PC-9 (cell line): ENCODE measurements at regions of chr19 and their contacts with region 1.

Region 1: DNA sequence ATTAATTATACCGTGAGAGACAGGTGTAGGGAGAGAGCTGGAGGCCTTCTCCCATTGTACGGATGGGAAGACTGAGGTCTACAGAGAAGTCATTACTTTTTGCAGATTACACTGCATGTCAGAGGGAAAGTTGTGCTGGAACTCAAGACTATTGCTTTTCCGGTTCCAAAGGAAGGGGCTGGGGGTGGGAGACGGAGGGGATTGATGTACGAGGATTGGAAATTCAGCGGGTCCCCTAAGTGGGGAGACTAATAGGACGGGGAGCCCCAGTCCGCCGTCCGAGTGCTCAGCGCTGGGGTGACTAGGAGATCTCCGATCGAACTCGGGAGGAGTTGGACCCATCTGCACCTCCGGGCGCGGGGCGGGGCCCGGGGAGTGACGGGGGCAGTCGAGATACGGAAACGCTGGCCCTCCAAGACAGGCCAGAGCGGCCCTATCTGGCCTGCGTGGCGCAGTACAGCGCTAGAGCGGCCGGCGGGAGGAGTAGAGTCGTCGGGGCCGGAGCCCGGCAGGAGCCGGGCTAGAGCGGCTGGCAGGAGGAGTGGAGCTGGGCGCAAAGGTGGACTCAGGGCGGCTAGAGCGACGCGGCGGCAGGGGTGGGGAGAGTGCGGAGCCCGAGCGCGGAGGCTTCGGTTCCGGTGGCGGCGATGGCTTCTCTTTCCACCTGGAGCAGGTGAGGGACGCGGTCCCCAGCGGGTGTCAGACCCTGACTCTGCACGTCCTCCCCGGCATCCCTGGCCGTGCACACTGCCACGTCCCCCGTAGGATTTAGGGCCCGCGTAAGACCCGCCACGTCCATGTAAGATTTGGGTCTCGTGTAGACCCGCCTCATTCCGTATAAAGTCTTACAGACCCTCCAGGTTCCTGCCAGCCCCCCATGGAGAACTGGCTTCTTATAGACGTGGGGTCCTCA is 1.1 kb downstream of the ARHGEF1 start:
- DNase-seq: peak; percentile 91 to 96
- H3K4me3 ChIP-seq: peak overlapping the region; percentile 83
- H3K27ac ChIP-seq: no peak overlapping the region
- H3K4me1 ChIP-seq: peaks cover 31% of the 10 kb centered on the region
- H3K27me3 ChIP-seq: no peaks in the 10 kb centered on the region
- CTCF ChIP-seq: no peak

Region 2: DNA sequence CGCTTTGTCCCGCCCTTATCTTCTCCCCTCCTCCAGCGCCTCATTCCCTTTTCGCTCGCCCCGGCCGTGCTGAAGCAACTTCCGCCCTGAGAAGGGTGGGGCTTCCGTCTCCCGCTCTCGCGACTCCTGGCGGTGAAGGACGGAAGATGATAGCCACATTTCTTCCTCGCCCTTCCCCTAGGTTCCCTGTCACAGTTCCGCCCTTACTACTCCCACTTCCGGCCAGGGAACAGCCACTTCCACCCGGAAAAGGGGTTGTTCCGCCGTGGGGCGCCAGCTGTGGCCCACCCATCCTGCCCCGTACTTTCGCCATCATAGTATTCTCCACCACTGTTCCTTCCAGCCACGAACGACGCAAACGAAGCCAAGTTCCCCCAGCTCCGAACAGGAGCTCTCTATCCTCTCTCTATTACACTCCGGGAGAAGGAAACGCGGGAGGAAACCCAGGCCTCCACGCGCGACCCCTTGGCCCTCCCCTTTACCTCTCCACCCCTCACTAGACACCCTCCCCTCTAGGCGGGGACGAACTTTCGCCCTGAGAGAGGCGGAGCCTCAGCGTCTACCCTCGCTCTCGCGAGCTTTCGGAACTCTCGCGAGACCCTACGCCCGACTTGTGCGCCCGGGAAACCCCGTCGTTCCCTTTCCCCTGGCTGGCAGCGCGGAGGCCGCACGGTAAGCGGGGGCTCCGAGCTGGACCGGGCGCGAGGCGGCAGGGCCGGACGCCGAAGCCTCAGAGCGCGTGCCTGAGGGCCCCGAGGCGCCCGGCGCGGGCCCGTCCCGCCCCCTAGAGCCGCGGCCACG is 24.3 kb before region 1 on chr19 and contains the start of gene RPS19:
- CTCF ChIA-PET with region 1: interaction called, 7 read pairs
- POLR2A ChIA-PET with region 1: interaction called, 3 read pairs
- intact Hi-C with region 1: loop called (anchors 1 kb)
- DNase-seq: peak; percentile 93 to 98
- H3K4me3 ChIP-seq: peak within 1 kb of the TSS; percentile 98
- H3K27ac ChIP-seq: peak within 1 kb of the TSS; percentile 96
- H3K4me1 ChIP-seq: peaks cover 41% of the 10 kb centered on the region
- H3K27me3 ChIP-seq: peaks cover 7% of the 10 kb centered on the region
- CTCF ChIP-seq: peak; percentile 63
- total RNA-seq, gene RPS19: 2,593 and 3,356 TPM in 2 replicates

Region 3: DNA sequence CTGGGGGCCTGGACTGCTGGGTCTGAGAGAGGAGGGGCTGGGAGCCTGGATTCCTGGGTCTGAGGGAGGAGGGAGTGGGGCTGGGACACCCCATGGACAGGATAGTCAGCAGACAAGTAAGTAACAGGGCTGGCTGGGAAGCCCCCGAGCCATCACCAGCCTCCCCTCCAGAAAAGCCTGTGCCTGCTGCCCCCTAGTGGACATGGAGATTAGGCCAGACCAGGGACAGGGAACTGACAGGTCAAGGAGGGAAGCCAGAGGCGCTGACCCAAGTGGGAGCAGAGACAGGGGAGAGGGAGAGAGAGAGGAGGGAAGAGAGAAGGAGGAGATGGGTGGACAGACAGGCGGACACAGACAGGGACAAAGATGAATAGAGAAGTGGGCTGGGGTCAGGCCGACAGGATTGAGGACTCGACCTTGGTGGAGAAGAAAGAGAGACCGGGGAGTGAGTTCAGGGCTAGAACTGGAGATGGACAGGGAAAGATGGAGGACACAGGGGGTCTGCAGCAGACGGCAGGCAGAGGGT is 50.8 kb after region 1 on chr19:
- CTCF ChIA-PET with region 1: interaction called, 13 read pairs
- POLR2A ChIA-PET with region 1: no interaction called
- intact Hi-C with region 1: loop called (anchors 2 kb)
- DNase-seq: peak in 1 of 2 experiments; percentile 69
- H3K4me3 ChIP-seq: no peak overlapping the region
- H3K27ac ChIP-seq: no peak overlapping the region
- H3K4me1 ChIP-seq: no peaks in the 10 kb centered on the region
- H3K27me3 ChIP-seq: peaks cover 44% of the 10 kb centered on the region
- CTCF ChIP-seq: peak; percentile 94

Region 4: GRCh38 chr19:41939861-41940730 is 56.0 kb after region 1 on chr19:
- CTCF ChIA-PET with region 1: interaction called, 13 read pairs
- POLR2A ChIA-PET with region 1: no interaction called
- intact Hi-C with region 1: loop called (anchors 2 kb)
- DNase-seq: no peak
- H3K4me3 ChIP-seq: peak overlapping the region; percentile 42; the same call in 1 of the 2 replicates
- H3K27ac ChIP-seq: no peak overlapping the region
- H3K4me1 ChIP-seq: no peaks in the 10 kb centered on the region
- H3K27me3 ChIP-seq: peaks cover 18% of the 10 kb centered on the region
- CTCF ChIP-seq: no peak